RWPE1 (cell line): ENCODE measurements at regions of chr1 and their contacts with region 1.

Region 1: DNA sequence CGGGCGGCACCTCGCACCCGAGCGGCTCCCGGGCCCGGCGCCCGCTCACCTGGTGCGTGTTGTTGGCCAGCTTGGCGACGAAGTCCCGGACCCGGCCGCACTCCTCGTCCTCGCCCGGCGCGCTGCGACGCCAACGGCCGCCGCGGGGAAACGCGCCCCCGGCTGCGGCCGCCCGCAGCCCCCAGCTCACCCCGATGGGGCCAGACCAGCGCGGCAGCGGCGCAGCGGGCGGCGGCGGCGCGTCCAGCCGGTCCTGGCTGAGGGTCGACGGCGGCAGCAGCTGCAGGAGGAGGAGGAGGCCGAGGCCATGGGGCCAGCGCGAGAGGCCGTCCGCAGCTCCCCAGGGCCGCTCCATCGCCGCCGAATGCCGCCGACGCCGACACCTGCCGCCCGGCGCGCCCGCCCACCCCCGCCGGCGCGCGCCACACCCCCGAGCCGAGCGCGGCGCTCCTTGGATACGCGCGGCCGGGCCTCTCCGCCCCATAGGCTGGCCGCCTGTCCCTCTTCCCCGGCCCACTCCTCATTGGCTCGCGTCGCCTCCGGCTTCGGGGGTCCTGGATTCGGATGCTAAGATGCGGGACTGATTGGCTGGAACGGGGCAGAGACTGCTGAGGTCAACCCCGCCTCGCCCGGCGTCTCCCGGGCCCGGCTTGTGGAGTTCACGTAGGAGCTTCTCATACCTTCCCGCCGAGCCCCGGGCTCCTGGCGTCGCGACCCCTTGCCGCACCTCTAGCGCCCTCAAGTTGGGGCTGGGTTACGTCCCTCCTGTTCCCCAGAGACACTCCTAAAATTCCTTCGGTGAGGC is at the start of gene SORT1:
- DNase-seq: peak; percentile 65
- H3K27ac ChIP-seq: no peak within 1 kb of the TSS
- CTCF ChIP-seq: no peak

Region 2: DNA sequence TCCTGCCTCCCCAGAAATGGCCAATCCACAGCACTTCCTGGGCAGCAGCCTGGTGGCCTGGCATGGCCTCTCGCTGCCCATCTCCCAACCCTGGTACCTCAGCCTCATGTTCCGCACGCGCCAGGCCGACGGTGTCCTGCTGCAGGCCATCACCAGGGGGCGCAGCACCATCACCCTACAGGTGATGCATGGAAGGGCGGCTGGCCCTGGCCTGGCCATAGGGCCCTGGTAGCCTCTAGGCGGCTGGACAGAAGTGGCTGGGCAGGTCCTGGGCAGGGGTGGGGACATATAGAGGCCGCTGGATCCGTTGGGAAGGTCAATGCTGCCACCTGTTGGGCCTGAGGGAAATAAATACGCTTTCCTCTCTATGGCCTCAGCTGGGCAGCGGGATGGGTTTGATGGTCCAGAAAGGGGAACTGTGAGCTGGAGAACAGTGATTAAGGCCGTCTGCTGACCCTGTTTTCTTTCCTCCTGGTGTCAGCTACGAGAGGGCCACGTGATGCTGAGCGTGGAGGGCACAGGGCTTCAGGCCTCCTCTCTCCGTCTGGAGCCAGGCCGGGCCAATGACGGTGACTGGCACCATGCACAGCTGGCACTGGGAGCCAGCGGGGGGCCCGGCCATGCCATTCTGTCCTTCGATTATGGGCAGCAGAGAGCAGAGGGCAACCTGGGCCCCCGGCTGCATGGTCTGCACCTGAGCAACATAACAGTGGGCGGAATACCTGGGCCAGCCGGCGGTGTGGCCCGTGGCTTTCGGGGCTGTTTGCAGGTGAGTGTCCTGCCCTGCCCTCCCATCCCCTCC is 133.9 kb before region 1 on chr1:
- CTCF ChIA-PET with region 1: interaction called, 13 read pairs
- POLR2A ChIA-PET with region 1: no interaction called
- DNase-seq: peak; percentile 86
- H3K27ac ChIP-seq: peak overlapping the region; percentile 92
- CTCF ChIP-seq: peak; percentile 97

Region 3: DNA sequence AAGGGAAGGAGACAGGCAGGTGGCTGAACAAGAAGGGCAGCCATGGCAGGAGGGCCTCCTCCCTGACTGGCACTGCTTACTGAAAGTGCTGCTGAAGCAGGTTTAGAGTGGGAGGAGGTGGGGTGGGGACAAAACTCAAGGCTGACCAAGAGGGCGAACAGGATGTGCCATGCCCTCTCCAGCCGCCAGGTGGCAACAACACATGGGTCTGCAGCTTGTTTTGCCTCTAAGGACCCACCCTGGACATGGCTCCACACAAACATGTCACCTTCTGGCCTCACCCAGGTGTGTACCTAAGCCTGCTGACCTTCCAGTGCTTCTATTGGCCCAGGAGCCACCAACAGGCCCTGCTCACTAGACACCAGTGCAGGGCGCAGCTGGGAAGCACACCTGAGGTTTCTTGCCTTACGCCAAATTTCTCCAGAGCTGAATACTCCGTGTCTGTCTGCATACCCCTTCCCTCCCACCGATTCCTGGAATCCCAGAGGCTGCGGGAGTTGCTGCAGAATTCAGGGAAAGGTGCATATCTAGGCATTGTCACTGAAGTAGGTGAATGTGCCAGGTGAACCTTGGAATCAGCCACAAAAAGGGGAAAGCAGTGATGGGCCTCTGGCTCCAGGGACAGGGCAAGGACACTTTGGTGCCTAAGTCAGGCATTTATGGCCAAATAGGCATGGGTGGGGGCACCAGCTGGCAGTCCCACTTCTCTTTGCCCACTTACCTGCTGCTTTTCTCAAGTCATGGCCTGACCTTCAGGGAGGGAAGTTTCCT is 120.1 kb before region 1 on chr1:
- CTCF ChIA-PET with region 1: interaction called, 12 read pairs
- POLR2A ChIA-PET with region 1: interaction called, 7 read pairs
- DNase-seq: peak; percentile 55
- H3K27ac ChIP-seq: peak overlapping the region; percentile 89
- CTCF ChIP-seq: peak; percentile 87

Region 4: DNA sequence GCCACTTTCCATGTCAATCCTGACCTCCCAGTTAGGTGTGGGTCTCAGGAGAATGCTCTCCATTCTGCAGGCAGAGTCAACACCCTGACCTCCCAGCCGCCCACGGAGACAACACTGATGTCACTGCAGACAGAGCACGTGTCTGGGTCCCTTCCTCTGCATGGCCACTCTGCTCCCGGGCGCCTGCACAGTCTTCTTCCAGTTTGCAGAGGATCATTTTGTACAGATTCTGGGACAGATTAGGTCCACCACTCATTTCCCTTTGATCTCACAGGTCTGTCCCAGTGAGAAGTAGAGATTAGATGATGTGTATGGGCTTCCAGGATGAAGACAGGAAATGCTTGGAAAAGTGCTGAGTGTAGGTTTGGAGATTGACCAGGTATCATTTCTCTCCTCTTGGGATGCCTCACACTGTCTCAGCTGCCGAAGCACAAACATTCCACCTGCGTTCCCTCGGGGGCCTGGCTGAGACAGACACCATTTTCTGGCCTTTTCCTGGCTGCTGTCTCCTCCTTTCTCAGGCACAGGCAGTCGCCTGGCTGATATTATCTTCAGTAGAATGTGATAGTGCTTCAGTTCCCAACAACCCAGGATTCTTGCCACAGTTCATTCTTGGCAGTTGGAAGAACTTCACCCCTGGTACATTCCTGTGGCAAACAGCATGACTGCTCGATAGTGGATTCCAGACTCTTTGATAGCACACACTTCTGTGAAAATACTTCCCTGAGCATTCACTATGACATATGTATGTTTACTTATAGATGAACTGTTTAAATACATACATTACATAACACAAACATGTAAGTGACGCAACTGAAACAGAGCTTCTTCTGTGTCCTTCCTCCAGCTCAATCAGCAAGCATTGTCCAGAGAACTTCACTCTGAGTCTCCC is 98.8 kb before region 1 on chr1:
- CTCF ChIA-PET with region 1: no interaction called
- POLR2A ChIA-PET with region 1: no interaction called
- DNase-seq: no peak
- H3K27ac ChIP-seq: no peak overlapping the region
- CTCF ChIP-seq: no peak

Region 5: DNA sequence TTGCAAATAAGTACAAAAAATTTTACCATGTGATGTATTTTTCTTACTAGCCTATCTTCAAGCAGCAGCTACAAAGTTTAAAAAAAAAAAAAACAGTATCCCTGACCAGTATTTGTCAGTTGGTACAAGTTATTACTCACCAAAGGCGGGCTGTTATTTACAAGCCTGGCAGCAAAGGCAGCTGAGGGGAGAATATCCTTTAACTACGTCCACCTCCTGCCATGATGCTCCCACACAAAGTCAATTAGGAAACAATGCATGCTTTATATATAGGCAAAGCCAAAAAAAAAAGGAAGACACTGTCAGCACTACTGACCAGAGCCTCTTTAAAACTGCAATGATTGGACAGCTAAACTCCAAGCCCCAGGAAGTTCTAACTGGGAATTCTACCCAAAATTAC is 14.8 kb after region 1 on chr1:
- CTCF ChIA-PET with region 1: no interaction called
- POLR2A ChIA-PET with region 1: no interaction called
- DNase-seq: no peak
- H3K27ac ChIP-seq: no peak overlapping the region
- CTCF ChIP-seq: no peak